ENCODE measurements at regions of chr20 and their contacts with region 1.

Region 1: GRCh38 chr20:54199721-54200176 is 8.1 kb upstream of the PFDN4 start:
- DNase-seq: peak; percentile 71 to 86 (median 82)
- H3K4me3 ChIP-seq: no peak overlapping the region
- H3K27ac ChIP-seq: no peak overlapping the region
- H3K4me1 ChIP-seq: peaks cover 2 to 11% (median 11%) of the 10 kb centered on the region in 3 donors
- H3K27me3 ChIP-seq: no peaks in the 10 kb centered on the region
- CTCF ChIP-seq: peak; percentile 89

Region 2: GRCh38 chr20:54097236-54097529 is 102.6 kb before region 1 on chr20:
- intact Hi-C with region 1: loop called (anchors 5 kb)
- DNase-seq: no peak
- H3K4me3 ChIP-seq: peak overlapping the region in 1 of 3 donors; percentile 58
- H3K27ac ChIP-seq: no peak overlapping the region
- H3K4me1 ChIP-seq: peaks cover 0 to 15% (median 0%) of the 10 kb centered on the region in 3 donors
- H3K27me3 ChIP-seq: no peaks in the 10 kb centered on the region
- CTCF ChIP-seq: no peak

Measured in kidney (tissue), 22 donors.